CD4-positive, alpha-beta memory T cell (primary cell): ENCODE measurements at regions of chr2 and their contacts with region 1.

Region 1: DNA sequence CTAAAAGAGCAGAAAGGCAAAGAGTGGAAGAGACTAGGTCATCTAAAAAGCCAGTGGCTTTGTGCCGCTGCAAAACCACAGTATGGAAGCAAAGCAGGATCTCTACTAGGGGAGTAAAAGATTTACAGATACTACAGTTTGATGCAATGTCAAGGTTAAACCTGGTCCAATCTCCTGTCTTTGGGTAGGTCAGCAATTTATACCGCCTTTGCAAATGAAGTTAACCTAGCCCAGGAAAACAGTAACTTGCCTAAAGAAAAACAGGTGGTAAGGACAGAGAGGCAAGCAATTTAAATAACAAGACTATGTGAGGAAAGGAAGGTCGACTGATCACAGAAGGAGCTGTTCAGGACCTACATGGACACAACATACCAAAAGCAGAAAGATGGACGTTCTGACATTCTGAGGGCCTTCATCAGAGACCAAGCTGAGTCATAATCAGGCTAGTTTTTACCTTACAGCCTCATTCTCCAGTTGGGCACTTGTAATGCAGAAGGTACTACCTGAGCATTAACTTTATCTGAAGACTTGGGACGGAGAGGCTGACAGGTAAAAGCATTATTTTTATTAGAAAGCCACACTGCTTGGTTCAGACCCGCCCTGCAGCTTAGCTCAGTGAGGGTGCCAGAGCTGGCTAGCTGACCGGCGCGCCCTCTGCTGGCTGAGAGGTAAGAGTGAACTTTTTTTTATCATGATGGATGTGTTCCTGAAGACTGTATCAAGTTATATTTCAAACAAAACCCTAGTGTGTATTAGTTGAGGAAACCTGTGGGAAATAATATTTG is 15.9 kb downstream of the CDKL4 start:
- DNase-seq: peak; percentile 72 to 79 (median 78)
- H3K4me3 ChIP-seq: no peak overlapping the region
- H3K4me3 Mint-ChIP-seq: peak overlapping the region; percentile 38 to 92 (median 76)
- H3K27ac ChIP-seq: no peak overlapping the region
- H3K27ac Mint-ChIP-seq: peak overlapping the region; percentile 5 to 88 (median 81)
- H3K4me1 ChIP-seq: peaks cover 15% of the 10 kb centered on the region
- H3K4me1 Mint-ChIP-seq: peaks cover 12 to 27% (median 20%) of the 10 kb centered on the region in 4 donors
- H3K27me3 ChIP-seq: no peaks in the 10 kb centered on the region
- H3K27me3 Mint-ChIP-seq: peaks cover 0 to 1% of the 10 kb centered on the region in 2 donors

Region 2: GRCh38 chr2:38922902-38923301 is 304.9 kb before region 1 on chr2:
- CTCF ChIA-PET with region 1: no interaction called
- POLR2A ChIA-PET with region 1: no interaction called
- intact Hi-C with region 1: no loop called
- DNase-seq: no peak
- H3K4me3 ChIP-seq: no peak overlapping the region
- H3K4me3 Mint-ChIP-seq: no peak overlapping the region
- H3K27ac ChIP-seq: no peak overlapping the region
- H3K27ac Mint-ChIP-seq: peak overlapping the region in 1 of 7 donors; percentile 5
- H3K4me1 ChIP-seq: no peaks in the 10 kb centered on the region
- H3K4me1 Mint-ChIP-seq: no peaks in the 10 kb centered on the region
- H3K27me3 ChIP-seq: no peaks in the 10 kb centered on the region
- H3K27me3 Mint-ChIP-seq: peaks cover 1 to 5% of the 10 kb centered on the region in 2 donors

Region 3: DNA sequence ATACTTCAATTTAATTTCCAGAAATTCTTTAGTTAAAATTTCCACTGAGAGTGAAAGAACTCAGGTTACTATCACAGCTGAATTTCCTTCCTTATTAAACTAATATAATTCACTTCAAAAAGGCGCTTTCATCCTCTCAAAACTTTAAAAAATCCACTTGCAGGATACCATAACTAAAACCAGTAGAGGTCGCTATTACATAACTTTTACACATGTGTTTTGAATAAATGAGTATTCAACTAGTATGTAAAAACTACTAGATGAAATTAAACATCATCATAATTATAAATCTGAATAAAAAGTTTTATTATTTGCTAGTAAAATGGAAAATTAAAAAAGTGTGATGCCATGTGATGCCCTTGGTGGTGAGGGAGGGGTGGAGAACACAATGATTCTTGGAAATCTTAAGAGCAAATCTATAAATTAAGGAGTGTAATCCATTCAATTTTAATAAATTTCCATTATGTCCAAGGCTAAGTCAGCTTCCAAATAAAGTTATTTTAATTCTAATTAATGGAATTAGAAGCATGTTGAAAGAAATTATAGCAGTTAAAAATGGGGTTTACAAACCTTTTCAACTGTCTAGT is 168.4 kb before region 1 on chr2:
- CTCF ChIA-PET with region 1: interaction called, 371 read pairs
- POLR2A ChIA-PET with region 1: interaction called, 31 read pairs
- intact Hi-C with region 1: loop called (anchors 1 kb)
- DNase-seq: peak in 4 of 5 donors; percentile 61 to 65 (median 62)
- H3K4me3 ChIP-seq: no peak overlapping the region
- H3K4me3 Mint-ChIP-seq: no peak overlapping the region
- H3K27ac ChIP-seq: no peak overlapping the region
- H3K27ac Mint-ChIP-seq: peak overlapping the region in 3 of 7 donors; percentile 0 to 68 (median 35)
- H3K4me1 ChIP-seq: no peaks in the 10 kb centered on the region
- H3K4me1 Mint-ChIP-seq: peaks cover 1 to 11% (median 4%) of the 10 kb centered on the region in 4 donors
- H3K27me3 ChIP-seq: no peaks in the 10 kb centered on the region
- H3K27me3 Mint-ChIP-seq: no peaks in the 10 kb centered on the region

Region 4: DNA sequence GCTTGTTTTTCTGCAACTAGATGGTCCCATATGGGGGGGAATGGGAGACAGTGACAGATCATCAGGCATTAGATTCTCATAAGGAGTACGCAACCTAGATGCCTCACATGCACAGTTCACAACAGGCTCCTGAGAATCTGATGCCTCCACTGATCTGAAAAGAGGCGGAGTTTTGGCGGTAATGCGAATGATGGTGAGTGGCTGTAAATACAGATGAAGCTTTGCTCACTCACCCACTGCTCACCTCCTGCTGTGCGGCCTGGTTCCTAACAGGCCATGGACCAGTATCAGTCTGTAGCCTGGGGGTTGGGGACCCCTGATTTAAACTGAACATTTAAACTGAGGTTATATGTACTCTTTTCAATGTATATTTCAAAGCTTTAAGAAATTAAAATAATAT is 147.7 kb before region 1 on chr2:
- CTCF ChIA-PET with region 1: interaction called, 16 read pairs
- POLR2A ChIA-PET with region 1: interaction called, 3 read pairs
- intact Hi-C with region 1: no loop called
- DNase-seq: no peak
- H3K4me3 ChIP-seq: no peak overlapping the region
- H3K4me3 Mint-ChIP-seq: no peak overlapping the region
- H3K27ac ChIP-seq: no peak overlapping the region
- H3K27ac Mint-ChIP-seq: no peak overlapping the region
- H3K4me1 ChIP-seq: peaks cover 25% of the 10 kb centered on the region
- H3K4me1 Mint-ChIP-seq: peaks cover 31 to 53% (median 42%) of the 10 kb centered on the region in 4 donors
- H3K27me3 ChIP-seq: no peaks in the 10 kb centered on the region
- H3K27me3 Mint-ChIP-seq: no peaks in the 10 kb centered on the region

Region 5: GRCh38 chr2:39107156-39107555 is 120.7 kb before region 1 on chr2:
- CTCF ChIA-PET with region 1: interaction called, 88 read pairs
- POLR2A ChIA-PET with region 1: no interaction called
- intact Hi-C with region 1: no loop called
- DNase-seq: no peak
- H3K4me3 ChIP-seq: no peak overlapping the region
- H3K4me3 Mint-ChIP-seq: peak overlapping the region in 3 of 8 donors; percentile 45 to 57 (median 53)
- H3K27ac ChIP-seq: no peak overlapping the region
- H3K27ac Mint-ChIP-seq: peak overlapping the region in 6 of 7 donors; percentile 43 to 83 (median 70)
- H3K4me1 ChIP-seq: peaks cover 72% of the 10 kb centered on the region
- H3K4me1 Mint-ChIP-seq: peaks cover 46 to 91% (median 66%) of the 10 kb centered on the region in 4 donors
- H3K27me3 ChIP-seq: no peaks in the 10 kb centered on the region
- H3K27me3 Mint-ChIP-seq: no peaks in the 10 kb centered on the region

Region 6: DNA sequence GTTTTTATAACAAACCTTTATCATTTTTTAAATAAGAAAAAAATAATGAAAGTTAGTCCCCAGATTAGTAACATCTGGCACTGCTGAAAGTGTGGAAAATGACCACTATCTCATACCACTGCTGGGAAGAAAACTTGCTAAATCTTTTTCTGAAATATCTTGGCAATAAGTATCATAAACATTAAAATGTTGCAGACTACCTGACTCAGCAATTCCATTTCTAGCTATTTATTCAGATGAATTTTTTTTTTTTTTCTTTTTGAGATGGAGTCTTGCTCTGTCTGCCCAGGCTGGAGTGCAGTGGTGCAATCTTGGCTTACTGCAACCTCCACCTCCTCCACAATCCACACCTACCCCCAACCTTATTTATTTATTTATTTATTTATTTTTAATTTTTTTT is 71.7 kb before region 1 on chr2:
- CTCF ChIA-PET with region 1: interaction called, 11 read pairs
- POLR2A ChIA-PET with region 1: interaction called, 3 read pairs
- intact Hi-C with region 1: no loop called
- DNase-seq: no peak
- H3K4me3 ChIP-seq: no peak overlapping the region
- H3K4me3 Mint-ChIP-seq: no peak overlapping the region
- H3K27ac ChIP-seq: no peak overlapping the region
- H3K27ac Mint-ChIP-seq: no peak overlapping the region
- H3K4me1 ChIP-seq: no peaks in the 10 kb centered on the region
- H3K4me1 Mint-ChIP-seq: no peaks in the 10 kb centered on the region
- H3K27me3 ChIP-seq: no peaks in the 10 kb centered on the region
- H3K27me3 Mint-ChIP-seq: no peaks in the 10 kb centered on the region

Region 7: GRCh38 chr2:39243476-39244123 is 15.8 kb after region 1 on chr2 and contains the start of gene CDKL4:
- CTCF ChIA-PET with region 1: interaction called, 14 read pairs
- POLR2A ChIA-PET with region 1: interaction called, 6 read pairs
- intact Hi-C with region 1: no loop called
- DNase-seq: peak; percentile 18 to 52 (median 44)
- H3K4me3 ChIP-seq: peak within 1 kb of the TSS in 1 of 2 donors; percentile 30
- H3K4me3 Mint-ChIP-seq: peak within 1 kb of the TSS; percentile 82 to 92 (median 88)
- H3K27ac ChIP-seq: no peak within 1 kb of the TSS
- H3K27ac Mint-ChIP-seq: peak within 1 kb of the TSS in 6 of 7 donors; percentile 38 to 88 (median 74)
- H3K4me1 ChIP-seq: no peaks in the 10 kb centered on the region
- H3K4me1 Mint-ChIP-seq: peaks cover 12 to 24% (median 17%) of the 10 kb centered on the region in 4 donors
- H3K27me3 ChIP-seq: no peaks in the 10 kb centered on the region
- H3K27me3 Mint-ChIP-seq: no peaks in the 10 kb centered on the region
- total RNA-seq, gene CDKL4: 0.38 TPM in 1 of 2 experiments, not detected in the other

Region 8: DNA sequence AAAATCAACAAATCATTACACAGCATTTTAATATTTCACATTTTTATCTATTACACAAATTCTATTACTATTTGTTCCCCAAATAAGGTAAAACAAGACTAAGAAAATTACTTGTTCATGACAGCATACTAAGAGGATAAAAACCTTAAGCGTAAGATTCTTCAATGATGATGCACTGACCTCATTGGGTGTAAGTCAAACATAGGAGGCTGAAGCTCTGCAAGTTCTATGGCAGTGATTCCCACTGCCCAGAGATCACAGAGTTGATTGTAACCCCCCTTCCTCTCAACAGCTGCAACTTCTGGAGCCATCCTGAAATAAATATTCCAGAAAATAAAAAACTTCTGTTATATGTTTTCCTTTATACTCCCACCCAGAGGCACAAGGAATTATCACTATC is 98.1 kb after region 1 on chr2:
- CTCF ChIA-PET with region 1: no interaction called
- POLR2A ChIA-PET with region 1: no interaction called
- intact Hi-C with region 1: no loop called
- DNase-seq: no peak
- H3K4me3 ChIP-seq: no peak overlapping the region
- H3K4me3 Mint-ChIP-seq: no peak overlapping the region
- H3K27ac ChIP-seq: no peak overlapping the region
- H3K27ac Mint-ChIP-seq: no peak overlapping the region
- H3K4me1 ChIP-seq: no peaks in the 10 kb centered on the region
- H3K4me1 Mint-ChIP-seq: no peaks in the 10 kb centered on the region
- H3K27me3 ChIP-seq: no peaks in the 10 kb centered on the region
- H3K27me3 Mint-ChIP-seq: no peaks in the 10 kb centered on the region

Region 9: GRCh38 chr2:40049781-40050180 is 822.0 kb after region 1 on chr2:
- CTCF ChIA-PET with region 1: no interaction called
- POLR2A ChIA-PET with region 1: no interaction called
- intact Hi-C with region 1: no loop called
- DNase-seq: no peak
- H3K4me3 ChIP-seq: no peak overlapping the region
- H3K4me3 Mint-ChIP-seq: no peak overlapping the region
- H3K27ac ChIP-seq: no peak overlapping the region
- H3K27ac Mint-ChIP-seq: no peak overlapping the region
- H3K4me1 ChIP-seq: no peaks in the 10 kb centered on the region
- H3K4me1 Mint-ChIP-seq: no peaks in the 10 kb centered on the region
- H3K27me3 ChIP-seq: no peaks in the 10 kb centered on the region
- H3K27me3 Mint-ChIP-seq: peaks cover 0 to 2% of the 10 kb centered on the region in 2 donors